ENCODE measurements at regions of chr20 and their contacts with region 1.

Region 1: GRCh38 chr20:64062596-64063388 is at the start of gene TCEA2:
- DNase-seq: peak; percentile 94
- ATAC-seq: peak; percentile 84
- H3K4me3 Mint-ChIP-seq: peak within 1 kb of the TSS; percentile 88
- H3K27ac Mint-ChIP-seq: peak within 1 kb of the TSS; percentile 67
- H3K4me1 Mint-ChIP-seq: peaks cover 51% of the 10 kb centered on the region
- H3K27me3 Mint-ChIP-seq: no peaks in the 10 kb centered on the region
- CTCF ChIP-seq: no peak
- total RNA-seq, gene TCEA2: 20.3 and 20.7 TPM in 2 replicates

Region 2: GRCh38 chr20:63627129-63627750 is 435.6 kb before region 1 on chr20:
- CTCF ChIA-PET with region 1: no interaction called
- POLR2A ChIA-PET with region 1: interaction called, 3 read pairs
- intact Hi-C with region 1: loop called (anchors 10 kb)
- DNase-seq: peak; percentile 97
- ATAC-seq: peak; percentile 77
- H3K4me3 Mint-ChIP-seq: peak overlapping the region; percentile 91
- H3K27ac Mint-ChIP-seq: peak overlapping the region; percentile 93
- H3K4me1 Mint-ChIP-seq: peaks cover 45% of the 10 kb centered on the region
- H3K27me3 Mint-ChIP-seq: no peaks in the 10 kb centered on the region
- CTCF ChIP-seq: no peak

Region 3: DNA sequence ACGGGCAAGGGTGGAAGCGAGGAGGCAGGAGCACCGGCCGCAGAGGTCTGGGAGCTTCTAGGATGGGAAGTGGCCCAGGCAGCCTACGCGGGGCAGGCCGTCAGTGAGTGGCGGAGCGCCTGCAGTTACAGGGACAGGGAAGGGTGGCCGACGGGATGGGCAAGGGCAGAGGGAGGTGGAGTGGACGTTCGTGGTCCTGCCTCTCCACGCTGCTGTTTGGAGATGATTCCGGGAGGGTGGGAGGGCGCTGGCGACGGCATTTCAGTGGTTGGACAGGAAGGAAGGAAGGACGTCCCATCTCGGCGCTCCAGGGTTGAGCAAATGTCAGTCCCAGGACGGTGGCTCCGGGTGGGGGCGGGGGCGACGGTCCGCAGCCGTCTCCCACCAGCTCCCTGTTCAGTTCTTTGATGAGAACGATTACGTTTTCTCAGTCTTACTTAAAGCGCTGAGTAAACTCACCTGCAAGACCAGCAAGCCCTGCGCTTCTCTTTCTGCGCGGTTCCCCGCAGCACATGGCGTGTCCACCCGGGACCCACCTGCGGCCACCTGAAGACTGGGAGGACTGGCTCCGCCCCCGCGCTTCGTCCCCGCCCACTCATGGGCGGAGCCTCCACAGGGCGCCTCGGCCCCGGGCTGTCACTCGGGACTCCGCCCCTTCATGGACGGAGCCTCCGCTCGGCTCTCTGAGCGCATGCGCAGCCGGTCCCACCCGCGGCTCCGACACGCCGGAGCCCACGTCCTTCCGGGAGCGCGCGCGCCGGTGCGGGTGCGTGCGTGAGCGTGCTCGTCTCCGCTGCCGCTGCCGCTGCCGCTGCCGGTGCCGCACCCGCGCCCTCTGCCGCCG is 168.2 kb before region 1 on chr20 and contains the start of gene DNAJC5:
- CTCF ChIA-PET with region 1: no interaction called
- POLR2A ChIA-PET with region 1: interaction called, 3 read pairs
- intact Hi-C with region 1: loop called (anchors 1 kb)
- DNase-seq: peak; percentile 97
- ATAC-seq: peak; percentile 92
- H3K4me3 Mint-ChIP-seq: peak within 1 kb of the TSS; percentile 88
- H3K27ac Mint-ChIP-seq: peak within 1 kb of the TSS; percentile 90
- H3K4me1 Mint-ChIP-seq: peaks cover 45% of the 10 kb centered on the region
- H3K27me3 Mint-ChIP-seq: no peaks in the 10 kb centered on the region
- CTCF ChIP-seq: no peak
- total RNA-seq, gene DNAJC5: 27.5 and 28.6 TPM in 2 replicates

Region 4: GRCh38 chr20:63980806-63981728 is 81.7 kb before region 1 on chr20 and contains the start of gene PRPF6:
- CTCF ChIA-PET with region 1: interaction called, 3 read pairs
- POLR2A ChIA-PET with region 1: interaction called, 6 read pairs
- intact Hi-C with region 1: loop called (anchors 1 kb)
- DNase-seq: peak; percentile 90
- ATAC-seq: peak; percentile 65
- H3K4me3 Mint-ChIP-seq: peak within 1 kb of the TSS; percentile 92
- H3K27ac Mint-ChIP-seq: peak within 1 kb of the TSS; percentile 94
- H3K4me1 Mint-ChIP-seq: peaks cover 50% of the 10 kb centered on the region
- H3K27me3 Mint-ChIP-seq: no peaks in the 10 kb centered on the region
- CTCF ChIP-seq: peak; percentile 25
- total RNA-seq, gene PRPF6: 75.7 and 75.8 TPM in 2 replicates

Region 5: DNA sequence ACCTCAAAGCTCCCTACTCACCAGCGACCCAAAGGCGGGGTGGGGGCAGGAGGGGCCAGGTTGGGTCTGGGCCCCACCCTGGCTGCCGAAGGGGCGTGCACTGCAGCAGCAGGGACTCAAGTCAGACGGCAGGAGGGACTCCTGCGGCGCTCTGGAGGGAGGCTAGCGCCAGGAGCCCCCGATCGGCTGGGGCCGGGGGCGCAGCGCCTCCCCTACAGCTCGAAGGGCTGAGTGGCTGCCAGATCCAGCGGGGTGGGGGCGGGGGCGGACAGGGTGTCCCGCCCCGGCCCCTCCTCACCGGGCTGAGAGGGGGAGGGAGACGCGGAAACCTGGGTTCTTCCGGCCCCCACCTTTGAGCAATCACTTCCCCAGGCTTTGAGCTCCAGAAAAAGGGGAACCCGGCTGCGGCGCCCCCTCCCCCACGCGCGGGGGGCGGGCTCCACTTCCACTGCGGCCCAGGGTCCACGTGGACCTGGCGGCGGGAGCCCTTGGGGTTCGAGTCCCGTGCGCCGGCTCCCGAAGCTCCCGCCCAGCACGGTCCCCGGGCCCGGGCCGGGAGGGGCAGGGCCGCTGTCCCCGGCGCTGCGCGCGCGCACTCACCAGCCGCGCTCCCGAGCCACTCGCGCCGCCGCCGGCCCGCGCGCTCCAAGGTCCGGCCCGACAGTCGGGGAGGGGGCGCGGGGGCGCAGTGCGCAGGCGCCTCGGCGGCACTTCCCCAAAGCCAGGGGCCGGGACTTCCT is 16.7 kb after region 1 on chr20 and contains the start of gene RGS19:
- CTCF ChIA-PET with region 1: interaction called, 8 read pairs
- POLR2A ChIA-PET with region 1: interaction called, 77 read pairs
- intact Hi-C with region 1: loop called (anchors 1 kb)
- DNase-seq: peak; percentile 86
- ATAC-seq: peak; percentile 49
- H3K4me3 Mint-ChIP-seq: peak within 1 kb of the TSS; percentile 87
- H3K27ac Mint-ChIP-seq: peak within 1 kb of the TSS; percentile 89
- H3K4me1 Mint-ChIP-seq: peaks cover 68% of the 10 kb centered on the region
- H3K27me3 Mint-ChIP-seq: peaks cover 3% of the 10 kb centered on the region
- CTCF ChIP-seq: no peak
- total RNA-seq, gene RGS19: 45.0 and 53.4 TPM in 2 replicates

Region 6: GRCh38 chr20:64119681-64120341 is 57.0 kb after region 1 on chr20:
- CTCF ChIA-PET with region 1: no interaction called
- POLR2A ChIA-PET with region 1: interaction called, 7 read pairs
- intact Hi-C with region 1: loop called (anchors 1 kb)
- DNase-seq: no peak
- ATAC-seq: peak; percentile 5
- H3K4me3 Mint-ChIP-seq: peak overlapping the region; percentile 71
- H3K27ac Mint-ChIP-seq: peak overlapping the region; percentile 78
- H3K4me1 Mint-ChIP-seq: peaks cover 8% of the 10 kb centered on the region
- H3K27me3 Mint-ChIP-seq: peaks cover 5% of the 10 kb centered on the region
- CTCF ChIP-seq: no peak

Region 7: GRCh38 chr20:64176548-64176947 is 113.8 kb after region 1 on chr20:
- CTCF ChIA-PET with region 1: no interaction called
- POLR2A ChIA-PET with region 1: no interaction called
- intact Hi-C with region 1: no loop called
- DNase-seq: no peak
- ATAC-seq: no peak
- H3K4me3 Mint-ChIP-seq: no peak overlapping the region
- H3K27ac Mint-ChIP-seq: no peak overlapping the region
- H3K4me1 Mint-ChIP-seq: no peaks in the 10 kb centered on the region
- H3K27me3 Mint-ChIP-seq: peaks cover 10% of the 10 kb centered on the region
- CTCF ChIP-seq: no peak